IMR-90 (cell line): ENCODE measurements at regions of chr16 and their contacts with region 1.

Region 1: GRCh38 chr16:14300705-14301168 is 229.6 kb downstream of the MRTFB start:
- DNase-seq: peak; percentile 85
- ATAC-seq: peak; percentile 62
- H3K4me3 ChIP-seq: no peak overlapping the region
- H3K27ac ChIP-seq: no peak overlapping the region
- H3K4me1 ChIP-seq: peaks cover 3% of the 10 kb centered on the region
- H3K27me3 ChIP-seq: no peaks in the 10 kb centered on the region
- CTCF ChIP-seq: peak; percentile 79
- POLR2A ChIP-seq: no peak
- RAD21 ChIP-seq: peak; percentile 89

Region 2: GRCh38 chr16:14240219-14240843 is 60.4 kb before region 1 on chr16:
- CTCF ChIA-PET with region 1: no interaction called
- POLR2A ChIA-PET with region 1: no interaction called
- dilution Hi-C with region 1: no loop called
- in situ Hi-C with region 1: no loop called
- intact Hi-C with region 1: no loop called
- DNase-seq: no peak
- ATAC-seq: peak; percentile 72
- H3K4me3 ChIP-seq: no peak overlapping the region
- H3K27ac ChIP-seq: no peak overlapping the region
- H3K4me1 ChIP-seq: no peaks in the 10 kb centered on the region
- H3K27me3 ChIP-seq: no peaks in the 10 kb centered on the region
- CTCF ChIP-seq: no peak
- POLR2A ChIP-seq: no peak
- RAD21 ChIP-seq: no peak

Region 3: GRCh38 chr16:14364386-14365204 is 63.9 kb after region 1 on chr16:
- CTCF ChIA-PET with region 1: no interaction called
- POLR2A ChIA-PET with region 1: no interaction called
- dilution Hi-C with region 1: no loop called
- in situ Hi-C with region 1: loop called (anchors 5 kb)
- intact Hi-C with region 1: loop called (anchors 2 kb)
- DNase-seq: peak; percentile 89
- ATAC-seq: peak; percentile 63
- H3K4me3 ChIP-seq: no peak overlapping the region; the same call in 1 of the 2 replicates
- H3K27ac ChIP-seq: 0 out of 2 replicates have a peak overlapping the region, but pooled peaks have one; percentile 11
- H3K4me1 ChIP-seq: peaks cover 10% of the 10 kb centered on the region
- H3K27me3 ChIP-seq: no peaks in the 10 kb centered on the region; the same call in 1 of the 2 replicates
- CTCF ChIP-seq: no peak
- POLR2A ChIP-seq: no peak
- RAD21 ChIP-seq: no peak

Region 4: GRCh38 chr16:14399378-14400284 is 98.9 kb after region 1 on chr16:
- CTCF ChIA-PET with region 1: no interaction called
- POLR2A ChIA-PET with region 1: no interaction called
- dilution Hi-C with region 1: no loop called
- in situ Hi-C with region 1: loop called (anchors 10 kb)
- intact Hi-C with region 1: no loop called
- DNase-seq: peak; percentile 62
- ATAC-seq: peak; percentile 93
- H3K4me3 ChIP-seq: no peak overlapping the region
- H3K27ac ChIP-seq: peak overlapping the region; percentile 58
- H3K4me1 ChIP-seq: peaks cover 8% of the 10 kb centered on the region
- H3K27me3 ChIP-seq: no peaks in the 10 kb centered on the region
- CTCF ChIP-seq: no peak
- POLR2A ChIP-seq: no peak
- RAD21 ChIP-seq: no peak

Region 5: DNA sequence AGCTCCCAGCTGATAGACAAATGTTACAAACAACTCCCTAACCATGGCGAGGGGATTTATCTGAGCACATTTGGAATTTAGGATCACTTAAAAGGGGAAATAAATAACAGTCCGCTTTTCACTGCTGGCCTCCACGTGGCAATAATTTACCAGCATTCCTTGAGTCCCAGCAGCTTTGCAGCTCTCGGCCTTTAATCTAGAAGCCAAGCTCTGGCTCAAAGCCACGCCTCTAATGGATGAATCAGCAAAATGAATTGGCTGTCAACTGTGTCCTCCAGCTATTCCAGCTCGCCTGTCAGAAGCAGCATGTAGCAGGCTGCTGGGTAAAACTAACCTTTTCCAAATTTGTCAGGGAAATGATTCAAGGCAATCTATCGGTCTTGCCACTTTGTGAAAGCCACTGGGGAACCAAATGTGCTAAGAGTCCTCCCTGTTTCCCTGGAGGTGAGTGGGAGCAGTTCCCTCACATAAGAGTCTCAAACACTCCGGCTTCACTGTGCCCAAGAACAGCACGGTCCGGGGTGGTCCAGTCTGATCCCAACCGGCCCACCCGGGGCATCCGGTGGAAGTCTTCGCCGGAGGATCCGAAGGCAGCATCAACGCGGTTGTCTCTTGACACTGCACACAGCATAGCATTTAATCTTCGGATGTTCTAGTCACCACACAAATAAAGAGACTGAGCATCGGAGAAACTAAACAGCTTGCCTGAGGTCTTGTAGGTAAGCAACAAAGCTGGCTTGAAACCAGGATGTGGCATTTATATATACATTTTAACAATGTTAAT is 186.0 kb after region 1 on chr16:
- CTCF ChIA-PET with region 1: interaction called, 3 read pairs
- POLR2A ChIA-PET with region 1: no interaction called
- dilution Hi-C with region 1: no loop called
- in situ Hi-C with region 1: no loop called
- intact Hi-C with region 1: loop called (anchors 1 kb)
- DNase-seq: peak; percentile 94
- ATAC-seq: peak; percentile 91
- H3K4me3 ChIP-seq: peak overlapping the region; percentile 2; the same call in 1 of the 2 replicates
- H3K27ac ChIP-seq: peak overlapping the region; percentile 44
- H3K4me1 ChIP-seq: peaks cover 17% of the 10 kb centered on the region
- H3K27me3 ChIP-seq: no peaks in the 10 kb centered on the region
- CTCF ChIP-seq: no peak
- POLR2A ChIP-seq: no peak
- RAD21 ChIP-seq: no peak

Region 6: GRCh38 chr16:14600164-14600563 is 299.4 kb after region 1 on chr16:
- CTCF ChIA-PET with region 1: no interaction called
- POLR2A ChIA-PET with region 1: no interaction called
- dilution Hi-C with region 1: no loop called
- in situ Hi-C with region 1: no loop called
- intact Hi-C with region 1: loop called (anchors 2 kb)
- DNase-seq: peak; percentile 41
- ATAC-seq: no peak
- H3K4me3 ChIP-seq: no peak overlapping the region
- H3K27ac ChIP-seq: no peak overlapping the region
- H3K4me1 ChIP-seq: no peaks in the 10 kb centered on the region
- H3K27me3 ChIP-seq: no peaks in the 10 kb centered on the region
- CTCF ChIP-seq: peak; percentile 44
- POLR2A ChIP-seq: no peak
- RAD21 ChIP-seq: peak; percentile 36